Caco-2 (cell line): ENCODE measurements at regions of chr2 and their contacts with region 1.

Region 1: GRCh38 chr2:102592597-102592996 is 26.8 kb upstream of the SLC9A2 start:
- DNase-seq: no peak
- H3K4me3 ChIP-seq: no peak overlapping the region
- H3K4me3 Mint-ChIP-seq: peak overlapping the region; percentile 4
- H3K27ac Mint-ChIP-seq: no peak overlapping the region
- H3K4me1 ChIP-seq: peaks cover 51% of the 10 kb centered on the region
- H3K4me1 Mint-ChIP-seq: peaks cover 43% of the 10 kb centered on the region
- H3K27me3 ChIP-seq: no peaks in the 10 kb centered on the region
- H3K27me3 Mint-ChIP-seq: no peaks in the 10 kb centered on the region
- CTCF ChIP-seq: peak; percentile 16 to 65

Region 2: DNA sequence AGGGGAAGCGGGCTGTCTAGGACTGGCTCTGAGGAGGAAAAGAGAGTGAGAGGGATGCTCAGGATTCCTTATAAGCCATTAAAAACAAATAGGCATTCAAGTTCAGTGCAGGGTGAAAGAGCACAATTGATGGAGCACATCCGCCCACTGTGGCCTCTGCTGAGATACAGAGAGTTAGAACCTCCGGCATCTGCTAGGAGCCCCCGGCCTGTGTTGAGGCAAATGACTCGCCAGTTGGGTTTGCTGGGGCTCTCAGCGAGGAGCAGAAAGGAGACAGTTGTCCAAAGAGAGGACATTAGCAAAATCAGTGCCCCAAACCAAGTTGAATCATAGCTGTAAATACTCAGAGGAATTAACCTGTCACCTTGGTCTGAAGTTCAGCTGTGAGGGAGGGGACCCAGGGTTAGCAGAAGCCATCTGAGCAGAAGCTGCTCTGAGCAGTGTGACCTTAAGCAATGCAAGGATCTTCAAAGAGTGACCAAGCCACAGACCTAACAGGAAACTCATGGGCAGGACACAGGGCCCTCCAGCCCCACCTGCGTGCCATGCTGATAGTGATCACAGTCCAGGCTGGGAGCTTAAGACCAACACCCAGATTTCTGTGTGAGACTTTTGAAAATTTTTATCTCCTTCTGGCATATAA is 193.0 kb before region 1 on chr2:
- CTCF ChIA-PET with region 1: no interaction called
- POLR2A ChIA-PET with region 1: no interaction called
- intact Hi-C with region 1: no loop called
- DNase-seq: no peak
- H3K4me3 ChIP-seq: no peak overlapping the region
- H3K4me3 Mint-ChIP-seq: no peak overlapping the region
- H3K27ac Mint-ChIP-seq: no peak overlapping the region
- H3K4me1 ChIP-seq: peaks cover 4% of the 10 kb centered on the region; the same call in 1 of the 2 replicates
- H3K4me1 Mint-ChIP-seq: no peaks in the 10 kb centered on the region
- H3K27me3 ChIP-seq: no peaks in the 10 kb centered on the region; the same call in 1 of the 2 replicates
- H3K27me3 Mint-ChIP-seq: no peaks in the 10 kb centered on the region
- CTCF ChIP-seq: no peak

Region 3: DNA sequence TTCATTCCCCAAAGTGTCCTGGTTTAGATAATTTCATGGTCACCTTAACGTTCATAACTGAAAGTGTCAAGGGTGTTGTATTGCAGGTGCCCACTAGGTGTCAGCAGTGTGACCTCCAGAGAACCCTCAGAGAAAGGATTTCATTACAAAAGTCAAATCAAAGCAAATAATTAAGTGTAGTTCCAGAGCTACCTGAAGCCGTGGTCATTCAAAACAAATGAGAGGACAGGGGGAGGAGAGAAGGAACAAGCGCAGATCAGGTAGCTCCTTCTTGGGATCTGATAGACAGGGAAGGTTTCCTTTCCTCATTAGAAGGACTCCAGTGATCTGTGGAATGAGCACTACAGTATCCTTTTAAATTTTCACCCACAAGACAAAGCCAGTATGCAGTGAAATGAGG is 119.6 kb before region 1 on chr2 and contains the start of gene SLC9A4:
- CTCF ChIA-PET with region 1: no interaction called
- POLR2A ChIA-PET with region 1: no interaction called
- intact Hi-C with region 1: loop called (anchors 1 kb)
- DNase-seq: peak; percentile 63 to 72
- H3K4me3 ChIP-seq: no peak within 1 kb of the TSS
- H3K4me3 Mint-ChIP-seq: no peak within 1 kb of the TSS
- H3K27ac Mint-ChIP-seq: no peak within 1 kb of the TSS
- H3K4me1 ChIP-seq: peaks cover 17% of the 10 kb centered on the region
- H3K4me1 Mint-ChIP-seq: no peaks in the 10 kb centered on the region
- H3K27me3 ChIP-seq: no peaks in the 10 kb centered on the region
- H3K27me3 Mint-ChIP-seq: no peaks in the 10 kb centered on the region
- CTCF ChIP-seq: peak; percentile 89 to 91
- total RNA-seq, gene SLC9A4: 1.2 and 1.4 TPM in 2 replicates

Region 4: GRCh38 chr2:102606363-102606762 is 13.8 kb after region 1 on chr2:
- CTCF ChIA-PET with region 1: interaction called, 7 read pairs
- POLR2A ChIA-PET with region 1: no interaction called
- intact Hi-C with region 1: loop called (anchors 1 kb)
- DNase-seq: peak; percentile 61 to 70
- H3K4me3 ChIP-seq: no peak overlapping the region
- H3K4me3 Mint-ChIP-seq: no peak overlapping the region
- H3K27ac Mint-ChIP-seq: no peak overlapping the region
- H3K4me1 ChIP-seq: peaks cover 40% of the 10 kb centered on the region
- H3K4me1 Mint-ChIP-seq: peaks cover 9% of the 10 kb centered on the region
- H3K27me3 ChIP-seq: no peaks in the 10 kb centered on the region
- H3K27me3 Mint-ChIP-seq: no peaks in the 10 kb centered on the region
- CTCF ChIP-seq: no peak